Activated CD8-positive, alpha-beta T cell treated with anti-CD3 and anti-CD28 coated beads, Interleukin-2, amount 10 ng/mL, durations not matched to agents 7 days and 5 days (primary cell): ENCODE measurements at regions of chr17 and their contacts with region 1.

Region 1: GRCh38 chr17:1122533-1123392 is 57.0 kb downstream of the ABR start:
- DNase-seq: peak; percentile 88
- ATAC-seq: peak; percentile 88
- H3K4me3 Mint-ChIP-seq: no peak overlapping the region
- H3K27ac Mint-ChIP-seq: no peak overlapping the region
- H3K4me1 Mint-ChIP-seq: peaks cover 28% of the 10 kb centered on the region
- H3K27me3 Mint-ChIP-seq: no peaks in the 10 kb centered on the region

Region 2: DNA sequence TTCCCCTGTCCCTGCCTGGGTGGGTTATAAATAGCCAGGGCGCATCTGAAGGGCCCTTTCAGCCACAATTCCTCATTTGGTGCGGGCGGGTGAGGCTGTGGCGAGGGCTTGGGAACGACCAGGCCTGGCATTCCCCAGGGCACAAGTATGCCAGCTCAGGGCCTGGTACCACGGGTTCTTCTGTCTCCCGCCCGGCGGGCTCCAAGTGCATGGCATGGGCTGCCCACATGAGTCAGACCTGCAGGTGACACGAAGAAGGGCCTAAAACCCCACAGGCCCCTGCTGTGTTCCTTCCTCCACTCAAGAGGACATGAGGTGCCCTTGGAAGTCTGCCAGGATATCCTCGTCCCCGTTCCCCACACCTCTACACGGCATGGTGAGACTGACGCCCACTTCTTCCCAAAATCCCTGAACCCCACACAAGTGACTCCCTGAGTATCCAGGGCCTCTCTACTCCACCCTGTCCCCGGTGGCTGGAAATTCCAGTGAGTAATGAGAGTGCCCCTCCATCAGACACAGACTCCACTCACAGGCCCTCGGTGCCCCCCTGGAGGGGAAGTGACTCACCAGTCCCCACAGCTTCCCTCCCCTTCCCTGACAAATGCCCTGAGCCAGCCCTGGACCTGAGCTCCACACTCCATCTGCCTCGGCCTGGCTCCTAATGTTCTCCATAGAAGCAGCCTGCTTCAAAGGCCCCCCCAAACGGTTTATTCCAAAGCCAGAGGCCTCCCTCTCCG is 11.7 kb before region 1 on chr17:
- CTCF ChIA-PET with region 1: interaction called, 18 read pairs
- POLR2A ChIA-PET with region 1: no interaction called
- DNase-seq: no peak
- ATAC-seq: no peak
- H3K4me3 Mint-ChIP-seq: peak overlapping the region; percentile 38
- H3K27ac Mint-ChIP-seq: peak overlapping the region; percentile 64
- H3K4me1 Mint-ChIP-seq: peaks cover 64% of the 10 kb centered on the region
- H3K27me3 Mint-ChIP-seq: no peaks in the 10 kb centered on the region

Region 3: DNA sequence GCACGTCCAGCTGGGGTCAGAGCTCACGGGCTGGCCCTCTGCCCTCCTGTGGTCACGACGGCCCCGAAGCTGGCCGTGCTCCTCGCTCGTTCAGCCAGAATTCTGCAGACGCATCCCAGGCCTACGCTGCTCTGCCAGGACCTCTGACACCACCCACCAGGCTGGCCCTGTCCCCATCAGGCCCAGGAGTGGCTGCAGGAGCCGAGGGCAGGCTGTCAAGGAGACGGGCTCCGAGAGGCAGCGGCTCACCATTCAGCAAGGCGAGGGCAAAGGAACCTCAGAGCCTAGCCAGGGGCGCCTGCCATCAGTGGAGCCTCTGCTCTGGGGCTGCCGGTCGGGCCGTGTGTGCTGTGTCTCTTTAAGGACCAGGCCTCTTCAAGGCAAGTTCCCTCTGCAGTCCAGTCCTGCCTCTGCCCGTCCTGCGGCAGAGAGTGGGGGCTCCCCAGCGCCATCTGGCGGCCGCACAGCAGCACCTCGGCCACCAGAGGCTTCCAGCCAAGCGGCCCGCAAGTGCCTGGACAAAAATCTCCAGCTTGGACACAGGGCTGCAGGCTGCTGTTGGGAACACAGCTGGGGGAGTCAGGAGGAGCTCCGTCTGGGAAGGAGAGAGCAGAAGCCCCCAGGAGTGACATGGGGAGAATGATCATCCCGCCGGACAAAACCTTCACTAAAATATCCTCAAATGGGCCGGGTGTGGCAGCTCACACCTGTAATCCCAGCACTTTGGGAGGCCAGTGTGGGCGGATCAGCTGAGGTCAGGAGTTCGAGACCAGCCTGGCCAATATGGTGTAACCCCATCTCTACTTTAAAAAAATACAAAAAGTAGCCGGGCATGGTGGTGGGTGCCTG is 64.4 kb after region 1 on chr17:
- CTCF ChIA-PET with region 1: interaction called, 77 read pairs
- POLR2A ChIA-PET with region 1: no interaction called
- DNase-seq: peak; percentile 80
- ATAC-seq: peak; percentile 95
- H3K4me3 Mint-ChIP-seq: no peak overlapping the region
- H3K27ac Mint-ChIP-seq: peak overlapping the region; percentile 61
- H3K4me1 Mint-ChIP-seq: peaks cover 29% of the 10 kb centered on the region
- H3K27me3 Mint-ChIP-seq: peaks cover 5% of the 10 kb centered on the region

Region 4: DNA sequence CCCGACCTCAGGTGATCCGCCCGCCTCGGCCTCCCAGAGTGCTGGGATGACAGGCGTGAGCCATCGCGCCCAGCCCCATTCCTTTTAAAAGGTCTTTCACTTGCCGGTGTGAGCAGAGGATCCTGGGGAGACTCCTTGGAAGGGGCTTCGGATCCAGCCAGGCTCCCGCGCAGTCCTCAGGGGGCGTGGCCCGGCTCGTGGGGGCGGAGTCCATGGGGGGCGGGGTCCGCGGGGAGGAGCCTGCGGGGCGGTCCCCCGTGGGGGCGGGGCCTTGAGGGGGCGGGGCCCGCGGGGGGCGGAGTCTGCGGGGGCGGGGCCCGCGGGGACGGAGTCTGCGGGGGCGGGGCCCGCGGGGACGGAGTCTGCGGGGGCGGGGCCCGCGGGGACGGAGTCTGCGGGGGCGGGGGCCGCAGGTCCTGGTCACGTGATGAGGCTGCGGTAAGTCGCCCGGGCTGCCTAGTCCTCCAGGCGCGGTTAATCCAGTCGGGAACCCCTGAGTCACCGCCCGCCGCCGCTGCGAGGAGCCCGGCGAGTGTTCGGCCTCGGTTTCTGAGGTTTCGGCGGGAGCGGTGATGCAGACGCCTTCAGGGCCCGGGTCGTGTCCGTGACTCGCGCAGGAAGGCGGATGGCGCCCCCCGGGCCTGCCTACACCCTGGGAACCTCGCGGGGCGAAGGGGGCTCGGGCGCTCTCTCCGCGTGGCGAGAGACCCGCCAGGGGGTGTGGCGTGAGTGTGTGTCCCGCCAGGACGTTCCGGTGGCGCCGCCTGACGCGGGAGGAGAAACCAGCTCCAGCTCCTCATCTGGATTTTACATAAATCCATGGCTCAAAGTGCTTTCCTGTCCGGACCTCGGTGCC is 80.6 kb after region 1 on chr17:
- CTCF ChIA-PET with region 1: interaction called, 18 read pairs
- POLR2A ChIA-PET with region 1: interaction called, 4 read pairs
- DNase-seq: peak; percentile 56
- ATAC-seq: peak; percentile 17
- H3K4me3 Mint-ChIP-seq: no peak overlapping the region
- H3K27ac Mint-ChIP-seq: no peak overlapping the region
- H3K4me1 Mint-ChIP-seq: peaks cover 55% of the 10 kb centered on the region
- H3K27me3 Mint-ChIP-seq: peaks cover 2% of the 10 kb centered on the region

Region 5: DNA sequence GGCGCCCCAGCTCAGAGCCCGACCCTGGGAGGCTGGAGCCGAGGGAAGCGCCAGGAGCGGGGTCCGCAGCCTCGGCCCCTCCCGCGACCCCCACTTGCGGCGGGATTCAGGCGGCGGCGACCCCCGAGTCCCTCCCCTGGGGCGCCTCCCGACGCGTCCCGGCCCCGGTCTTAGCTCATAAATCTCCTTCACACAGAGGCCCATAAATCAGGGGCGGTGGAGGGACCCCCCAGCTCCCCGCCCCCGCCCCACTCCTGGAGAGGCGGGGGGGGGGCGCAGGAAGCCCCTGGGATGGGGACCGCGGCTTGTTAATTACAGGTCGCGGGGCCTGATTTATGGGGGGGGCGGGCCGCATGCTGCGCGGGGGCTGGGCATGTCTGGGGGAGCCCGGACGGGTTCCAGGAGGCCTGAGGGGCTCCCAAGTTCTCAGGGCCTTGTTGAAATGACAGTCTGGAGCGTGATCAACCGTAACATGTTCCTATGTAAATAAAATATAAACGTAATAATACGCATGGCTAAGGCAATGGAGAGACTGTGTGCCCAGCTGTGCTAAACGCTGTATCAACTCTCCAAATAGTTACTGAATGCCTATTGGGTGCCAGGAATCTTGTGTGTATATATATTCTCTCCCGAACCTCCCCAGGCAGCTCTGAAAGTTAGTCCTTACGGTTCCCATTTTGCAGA is 137.5 kb after region 1 on chr17:
- CTCF ChIA-PET with region 1: interaction called, 10 read pairs
- POLR2A ChIA-PET with region 1: no interaction called
- DNase-seq: no peak
- ATAC-seq: no peak
- H3K4me3 Mint-ChIP-seq: no peak overlapping the region
- H3K27ac Mint-ChIP-seq: no peak overlapping the region
- H3K4me1 Mint-ChIP-seq: peaks cover 44% of the 10 kb centered on the region
- H3K27me3 Mint-ChIP-seq: peaks cover 20% of the 10 kb centered on the region